Esophagus muscularis mucosa (tissue), 4 donors: ENCODE measurements at regions of chrX and their contacts with region 1.

Region 1: GRCh38 chrX:69538321-69538876 is 34.3 kb downstream of the NALF2 start:
- DNase-seq: no peak
- H3K4me3 ChIP-seq: peak overlapping the region; percentile 51 to 60 (median 56)
- H3K27ac ChIP-seq: peak overlapping the region in 2 of 4 donors; percentile 31 to 51
- H3K4me1 ChIP-seq: peaks cover 4 to 9% (median 6%) of the 10 kb centered on the region in 4 donors
- H3K27me3 ChIP-seq: peaks cover 0 to 5% (median 0%) of the 10 kb centered on the region in 4 donors
- CTCF ChIP-seq: peak; percentile 60 to 83 (median 72)
- EP300 ChIP-seq: no peak
- POLR2A ChIP-seq: no peak

Region 2: DNA sequence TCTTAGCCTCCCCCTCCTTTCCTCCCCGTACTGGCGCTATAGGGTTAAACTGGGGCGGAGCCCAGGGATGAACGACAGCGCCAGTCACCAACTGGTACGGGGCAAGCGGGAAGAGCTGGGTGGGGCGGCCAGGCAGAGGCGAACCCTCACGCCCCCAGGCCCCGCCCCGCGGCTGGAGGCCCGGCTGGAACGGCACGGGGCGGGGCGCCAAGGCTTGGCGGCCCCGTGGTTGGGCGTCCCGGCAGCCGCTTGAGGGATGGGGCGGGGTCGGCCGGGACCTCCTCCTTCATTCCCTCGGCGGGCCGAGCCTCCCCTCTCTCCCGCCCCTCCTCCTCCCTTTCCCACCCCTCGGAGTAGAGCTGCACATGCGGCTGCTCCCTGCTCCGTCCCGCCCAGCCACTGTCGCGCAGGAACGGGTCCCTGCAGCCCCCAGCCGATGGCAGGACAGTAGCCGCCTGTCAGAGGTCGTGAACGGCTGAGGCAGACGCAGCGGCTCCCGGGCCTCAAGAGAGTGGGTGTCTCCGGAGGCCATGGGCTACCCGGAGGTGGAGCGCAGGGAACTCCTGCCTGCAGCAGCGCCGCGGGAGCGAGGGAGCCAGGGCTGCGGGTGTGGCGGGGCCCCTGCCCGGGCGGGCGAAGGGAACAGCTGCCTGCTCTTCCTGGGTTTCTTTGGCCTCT is 77.5 kb after region 1 on chrX and contains the start of gene EDA:
- intact Hi-C with region 1: loop called (anchors 2 kb)
- DNase-seq: peak; percentile 92
- H3K4me3 ChIP-seq: peak within 1 kb of the TSS; percentile 63 to 73 (median 68)
- H3K27ac ChIP-seq: peak within 1 kb of the TSS; percentile 58 to 75 (median 66)
- H3K4me1 ChIP-seq: peaks cover 0 to 13% (median 6%) of the 10 kb centered on the region in 4 donors
- H3K27me3 ChIP-seq: no peaks in the 10 kb centered on the region
- CTCF ChIP-seq: no peak
- EP300 ChIP-seq: no peak
- POLR2A ChIP-seq: no peak
- total RNA-seq, gene EDA: 4.3 to 10.9 (median 6.3) TPM

Region 3: GRCh38 chrX:69674891-69675290 is 136.5 kb after region 1 on chrX:
- intact Hi-C with region 1: no loop called
- DNase-seq: no peak
- H3K4me3 ChIP-seq: no peak overlapping the region
- H3K27ac ChIP-seq: no peak overlapping the region
- H3K4me1 ChIP-seq: no peaks in the 10 kb centered on the region
- H3K27me3 ChIP-seq: no peaks in the 10 kb centered on the region
- CTCF ChIP-seq: no peak
- EP300 ChIP-seq: no peak
- POLR2A ChIP-seq: no peak

Region 4: GRCh38 chrX:69951753-69952152 is 413.4 kb after region 1 on chrX:
- intact Hi-C with region 1: no loop called
- DNase-seq: no peak
- H3K4me3 ChIP-seq: no peak overlapping the region
- H3K27ac ChIP-seq: no peak overlapping the region
- H3K4me1 ChIP-seq: no peaks in the 10 kb centered on the region
- H3K27me3 ChIP-seq: no peaks in the 10 kb centered on the region
- CTCF ChIP-seq: no peak
- EP300 ChIP-seq: no peak
- POLR2A ChIP-seq: no peak

Region 5: DNA sequence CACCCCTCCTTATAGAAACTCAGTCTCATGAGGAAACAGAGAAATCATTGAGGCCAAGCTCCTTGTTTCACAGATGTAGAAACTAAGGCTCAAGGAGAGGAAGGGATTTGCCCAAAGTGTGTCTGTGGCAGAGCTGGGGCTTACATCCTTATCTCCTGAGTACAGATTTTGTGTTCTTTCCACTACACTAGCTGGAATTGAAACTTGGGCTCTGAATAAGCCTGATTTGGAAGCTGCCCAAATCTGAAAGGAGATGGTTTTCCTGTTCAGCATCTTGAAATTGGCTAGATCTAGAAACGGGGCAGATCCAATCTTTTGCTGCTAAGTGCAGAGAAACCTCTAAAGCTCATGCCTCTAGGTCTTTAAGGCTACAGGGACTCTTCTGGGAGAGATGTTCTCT is 487.1 kb after region 1 on chrX:
- intact Hi-C with region 1: loop called (anchors 5 kb)
- DNase-seq: no peak
- H3K4me3 ChIP-seq: no peak overlapping the region
- H3K27ac ChIP-seq: no peak overlapping the region
- H3K4me1 ChIP-seq: peaks cover 0 to 25% (median 17%) of the 10 kb centered on the region in 4 donors
- H3K27me3 ChIP-seq: no peaks in the 10 kb centered on the region
- CTCF ChIP-seq: no peak
- EP300 ChIP-seq: no peak
- POLR2A ChIP-seq: no peak

Region 6: DNA sequence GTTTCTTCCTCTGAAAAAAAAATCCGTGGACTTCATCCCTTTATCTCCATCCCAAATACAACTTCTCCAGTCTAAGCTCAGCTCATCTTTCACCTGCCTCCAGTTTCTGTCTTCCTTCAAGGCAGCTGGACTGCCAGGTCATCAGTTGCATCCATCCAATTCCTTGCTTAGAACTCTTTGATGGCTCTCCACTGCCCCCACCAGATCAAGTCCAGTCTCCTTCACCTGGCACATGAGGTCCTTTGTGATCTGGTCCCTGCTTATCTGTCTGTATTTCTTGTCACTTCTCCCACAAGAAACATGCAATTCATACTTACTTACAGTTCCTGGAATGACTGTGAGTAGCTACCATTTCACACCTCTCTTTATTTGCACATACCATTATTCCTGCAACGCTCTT is 557.7 kb after region 1 on chrX:
- intact Hi-C with region 1: loop called (anchors 2 kb)
- DNase-seq: no peak
- H3K4me3 ChIP-seq: no peak overlapping the region
- H3K27ac ChIP-seq: no peak overlapping the region
- H3K4me1 ChIP-seq: no peaks in the 10 kb centered on the region
- H3K27me3 ChIP-seq: no peaks in the 10 kb centered on the region
- CTCF ChIP-seq: no peak
- EP300 ChIP-seq: no peak
- POLR2A ChIP-seq: no peak

Region 7: DNA sequence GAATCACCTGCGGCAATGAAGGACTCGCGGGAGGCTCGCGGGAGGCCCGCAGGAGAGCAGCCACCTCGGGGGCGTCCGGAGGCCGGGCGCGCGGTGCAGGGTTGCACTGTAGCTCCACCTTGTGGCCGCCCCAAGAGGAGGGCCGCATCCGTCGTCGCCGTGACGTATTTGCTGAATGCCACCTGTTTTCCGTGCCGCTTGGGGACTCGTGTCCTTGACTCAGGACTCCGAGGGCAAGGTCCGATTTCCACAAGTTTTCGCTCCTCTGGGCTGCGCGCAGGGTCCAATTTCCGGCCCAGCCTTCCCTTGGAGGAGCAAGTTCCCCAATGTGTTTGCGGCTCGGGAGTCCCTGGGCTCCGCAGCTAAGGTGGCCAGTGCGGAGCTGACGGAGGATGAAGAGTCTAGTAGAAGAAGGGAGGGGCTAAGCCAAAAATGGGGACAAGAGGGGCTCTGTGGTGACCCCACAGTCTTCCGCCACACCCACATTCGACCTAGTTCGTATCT is 895.5 kb after region 1 on chrX:
- intact Hi-C with region 1: no loop called
- DNase-seq: peak; percentile 92
- H3K4me3 ChIP-seq: peak overlapping the region; percentile 61 to 72 (median 66)
- H3K27ac ChIP-seq: peak overlapping the region; percentile 64 to 85 (median 78)
- H3K4me1 ChIP-seq: peaks cover 0 to 15% (median 12%) of the 10 kb centered on the region in 4 donors
- H3K27me3 ChIP-seq: no peaks in the 10 kb centered on the region
- CTCF ChIP-seq: peak; percentile 59 to 76 (median 59)
- EP300 ChIP-seq: no peak
- POLR2A ChIP-seq: no peak